Mammary epithelial cell (primary cell): ENCODE measurements at regions of chr3 and their contacts with region 1.

Region 1: DNA sequence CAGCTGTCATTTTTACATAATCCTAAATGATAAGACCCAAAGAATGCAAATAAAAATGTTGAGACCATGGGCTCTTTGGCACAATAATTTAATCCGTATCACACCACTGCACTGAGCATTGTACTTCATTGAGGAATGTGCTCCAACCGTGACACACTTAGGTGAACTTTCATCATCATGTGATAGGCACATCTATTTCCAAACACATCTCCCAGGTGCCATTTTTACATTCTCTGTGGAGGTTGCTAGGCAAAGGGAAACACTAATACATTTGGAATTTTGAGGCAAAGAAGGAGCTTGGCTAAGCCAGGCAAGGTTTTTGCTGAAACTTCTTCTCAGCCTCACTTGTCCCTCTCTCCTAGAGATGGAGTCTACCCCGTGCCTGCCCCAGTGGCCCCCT is 68.7 kb downstream of the LRTM1 start:
- DNase-seq: peak; percentile 81
- H3K4me3 ChIP-seq: no peak overlapping the region
- H3K27ac ChIP-seq: no peak overlapping the region
- H3K4me1 ChIP-seq: peaks cover 32% of the 10 kb centered on the region
- H3K27me3 ChIP-seq: no peaks in the 10 kb centered on the region
- CTCF ChIP-seq: no peak

Region 2: DNA sequence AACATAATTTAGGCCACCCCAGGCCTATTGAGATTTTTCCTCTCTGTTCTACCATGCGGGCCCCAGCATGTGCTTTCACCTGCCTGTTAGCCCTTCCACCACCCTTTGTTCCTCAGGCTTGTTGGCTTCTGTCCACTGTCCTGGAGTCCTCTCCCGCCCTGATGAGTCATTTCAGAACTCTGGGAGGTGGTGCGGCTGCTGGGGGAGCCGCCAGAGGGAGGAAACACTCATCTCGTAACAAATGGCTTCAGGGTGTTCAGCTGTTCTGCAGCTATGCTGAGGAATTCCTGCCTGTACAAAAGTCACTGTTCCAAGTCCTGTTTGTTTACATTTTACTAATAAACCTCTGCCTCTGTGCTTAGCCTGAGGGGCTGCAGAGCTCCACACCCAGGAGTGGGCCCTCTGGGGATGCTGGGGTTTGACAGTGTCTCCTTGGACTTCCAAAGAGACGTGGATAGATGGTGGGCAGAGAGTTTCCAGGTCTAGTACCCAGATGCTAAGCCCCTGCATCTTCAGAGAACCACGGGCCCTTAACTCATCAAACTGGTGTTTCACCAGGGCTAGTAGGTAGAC is 32.5 kb after region 1 on chr3:
- CTCF ChIA-PET with region 1: no interaction called
- dilution Hi-C with region 1: no loop called
- in situ Hi-C with region 1: no loop called
- intact Hi-C with region 1: loop called (anchors 1 kb)
- DNase-seq: peak; percentile 97
- H3K4me3 ChIP-seq: no peak overlapping the region
- H3K27ac ChIP-seq: peak overlapping the region; percentile 33
- H3K4me1 ChIP-seq: peaks cover 25% of the 10 kb centered on the region
- H3K27me3 ChIP-seq: no peaks in the 10 kb centered on the region
- CTCF ChIP-seq: peak; percentile 49 to 57

Region 3: GRCh38 chr3:55305696-55306485 is 446.7 kb after region 1 on chr3:
- CTCF ChIA-PET with region 1: no interaction called
- dilution Hi-C with region 1: no loop called
- in situ Hi-C with region 1: no loop called
- intact Hi-C with region 1: no loop called
- DNase-seq: no peak
- H3K4me3 ChIP-seq: no peak overlapping the region
- H3K27ac ChIP-seq: no peak overlapping the region
- H3K4me1 ChIP-seq: no peaks in the 10 kb centered on the region
- H3K27me3 ChIP-seq: no peaks in the 10 kb centered on the region
- CTCF ChIP-seq: no peak

Region 4: GRCh38 chr3:55362210-55362960 is 503.2 kb after region 1 on chr3:
- CTCF ChIA-PET with region 1: no interaction called
- dilution Hi-C with region 1: no loop called
- in situ Hi-C with region 1: no loop called
- intact Hi-C with region 1: no loop called
- DNase-seq: peak; percentile 39
- H3K4me3 ChIP-seq: no peak overlapping the region
- H3K27ac ChIP-seq: no peak overlapping the region
- H3K4me1 ChIP-seq: no peaks in the 10 kb centered on the region
- H3K27me3 ChIP-seq: no peaks in the 10 kb centered on the region
- CTCF ChIP-seq: no peak

Region 5: GRCh38 chr3:55405436-55405835 is 546.3 kb after region 1 on chr3:
- CTCF ChIA-PET with region 1: no interaction called
- dilution Hi-C with region 1: no loop called
- in situ Hi-C with region 1: no loop called
- intact Hi-C with region 1: loop called (anchors 5 kb)
- DNase-seq: peak; percentile 17
- H3K4me3 ChIP-seq: no peak overlapping the region
- H3K27ac ChIP-seq: no peak overlapping the region
- H3K4me1 ChIP-seq: peaks cover 15% of the 10 kb centered on the region
- H3K27me3 ChIP-seq: no peaks in the 10 kb centered on the region
- CTCF ChIP-seq: peak; percentile 38 to 49